ENCODE measurements at regions of chr9 and their contacts with region 1.

Region 1: DNA sequence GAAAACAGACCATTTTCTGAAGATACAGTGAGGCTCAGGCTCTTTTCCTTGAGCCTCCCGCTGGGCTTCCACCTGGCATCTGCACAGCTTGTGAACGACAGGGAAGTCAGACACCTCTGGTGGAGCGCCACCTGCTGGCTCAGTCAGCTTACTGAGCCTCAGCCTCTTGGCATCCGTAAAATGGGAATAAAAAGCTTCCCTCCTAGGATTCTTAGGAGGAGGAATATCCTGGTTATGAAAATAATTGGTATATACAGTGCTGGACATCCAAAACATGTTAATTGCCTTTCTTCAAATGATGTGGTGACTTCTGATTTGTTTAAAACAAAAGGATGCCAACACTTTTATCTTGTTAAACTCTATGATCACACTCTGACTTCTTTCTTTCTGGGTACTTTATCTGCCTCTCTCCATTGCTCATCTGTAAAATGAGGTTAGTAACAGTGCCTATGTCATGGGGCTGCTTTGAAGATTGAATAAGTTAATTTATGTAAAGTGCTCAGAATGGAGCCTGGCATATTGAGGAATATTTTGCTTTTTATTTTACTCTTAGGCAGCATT is 67.5 kb downstream of the MAMDC2 start:
- DNase-seq: peak in 4 of 5 donors; percentile 21 to 26 (median 24)
- H3K4me3 ChIP-seq: no peak overlapping the region
- H3K4me3 Mint-ChIP-seq: no peak overlapping the region
- H3K27ac ChIP-seq: no peak overlapping the region
- H3K27ac Mint-ChIP-seq: no peak overlapping the region
- H3K4me1 ChIP-seq: no peaks in the 10 kb centered on the region
- H3K4me1 Mint-ChIP-seq: peaks cover 6 to 11% (median 9%) of the 10 kb centered on the region in 4 donors
- H3K27me3 ChIP-seq: no peaks in the 10 kb centered on the region
- H3K27me3 Mint-ChIP-seq: peaks cover 10 to 17% of the 10 kb centered on the region in 2 donors

Region 2: GRCh38 chr9:69582544-69583297 is 528.4 kb before region 1 on chr9:
- CTCF ChIA-PET with region 1: no interaction called
- POLR2A ChIA-PET with region 1: no interaction called
- intact Hi-C with region 1: no loop called
- DNase-seq: no peak
- H3K4me3 ChIP-seq: no peak overlapping the region
- H3K4me3 Mint-ChIP-seq: no peak overlapping the region
- H3K27ac ChIP-seq: no peak overlapping the region
- H3K27ac Mint-ChIP-seq: no peak overlapping the region
- H3K4me1 ChIP-seq: no peaks in the 10 kb centered on the region
- H3K4me1 Mint-ChIP-seq: peaks cover 0 to 2% (median 0%) of the 10 kb centered on the region in 4 donors
- H3K27me3 ChIP-seq: no peaks in the 10 kb centered on the region
- H3K27me3 Mint-ChIP-seq: peaks cover 0 to 4% of the 10 kb centered on the region in 2 donors

Region 3: DNA sequence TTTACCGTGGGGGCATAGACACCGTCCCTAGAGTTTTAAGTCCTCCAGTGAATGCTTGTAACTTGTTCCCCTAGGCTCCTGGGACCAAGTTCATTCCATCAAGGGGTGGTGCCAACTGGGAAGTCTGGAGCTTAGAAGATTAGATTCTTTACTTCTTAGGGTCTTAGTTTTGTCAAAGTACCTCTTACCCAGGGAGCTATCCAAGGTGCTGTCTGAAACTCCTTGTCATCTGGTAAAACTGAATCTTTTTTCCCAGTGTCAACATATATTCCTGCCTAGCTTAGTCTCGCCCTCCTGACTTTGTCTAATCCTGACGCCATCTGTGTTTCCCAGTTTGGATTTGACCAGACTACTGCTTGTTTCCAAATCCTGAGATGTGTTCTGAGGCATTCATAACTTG is 25.9 kb before region 1 on chr9:
- CTCF ChIA-PET with region 1: interaction called, 12 read pairs
- POLR2A ChIA-PET with region 1: no interaction called
- intact Hi-C with region 1: no loop called
- DNase-seq: no peak
- H3K4me3 ChIP-seq: no peak overlapping the region
- H3K4me3 Mint-ChIP-seq: no peak overlapping the region
- H3K27ac ChIP-seq: no peak overlapping the region
- H3K27ac Mint-ChIP-seq: no peak overlapping the region
- H3K4me1 ChIP-seq: no peaks in the 10 kb centered on the region
- H3K4me1 Mint-ChIP-seq: peaks cover 0 to 5% (median 0%) of the 10 kb centered on the region in 4 donors
- H3K27me3 ChIP-seq: no peaks in the 10 kb centered on the region
- H3K27me3 Mint-ChIP-seq: peaks cover 5 to 13% of the 10 kb centered on the region in 2 donors

Region 4: GRCh38 chr9:70093944-70094343 is 17.2 kb before region 1 on chr9:
- CTCF ChIA-PET with region 1: interaction called, 12 read pairs
- POLR2A ChIA-PET with region 1: no interaction called
- intact Hi-C with region 1: no loop called
- DNase-seq: peak in 4 of 5 donors; percentile 3 to 41 (median 31)
- H3K4me3 ChIP-seq: no peak overlapping the region
- H3K4me3 Mint-ChIP-seq: no peak overlapping the region
- H3K27ac ChIP-seq: no peak overlapping the region
- H3K27ac Mint-ChIP-seq: peak overlapping the region in 3 of 7 donors; percentile 25 to 48 (median 48)
- H3K4me1 ChIP-seq: no peaks in the 10 kb centered on the region
- H3K4me1 Mint-ChIP-seq: peaks cover 6 to 15% (median 8%) of the 10 kb centered on the region in 4 donors
- H3K27me3 ChIP-seq: no peaks in the 10 kb centered on the region
- H3K27me3 Mint-ChIP-seq: peaks cover 3 to 10% of the 10 kb centered on the region in 2 donors

Region 5: DNA sequence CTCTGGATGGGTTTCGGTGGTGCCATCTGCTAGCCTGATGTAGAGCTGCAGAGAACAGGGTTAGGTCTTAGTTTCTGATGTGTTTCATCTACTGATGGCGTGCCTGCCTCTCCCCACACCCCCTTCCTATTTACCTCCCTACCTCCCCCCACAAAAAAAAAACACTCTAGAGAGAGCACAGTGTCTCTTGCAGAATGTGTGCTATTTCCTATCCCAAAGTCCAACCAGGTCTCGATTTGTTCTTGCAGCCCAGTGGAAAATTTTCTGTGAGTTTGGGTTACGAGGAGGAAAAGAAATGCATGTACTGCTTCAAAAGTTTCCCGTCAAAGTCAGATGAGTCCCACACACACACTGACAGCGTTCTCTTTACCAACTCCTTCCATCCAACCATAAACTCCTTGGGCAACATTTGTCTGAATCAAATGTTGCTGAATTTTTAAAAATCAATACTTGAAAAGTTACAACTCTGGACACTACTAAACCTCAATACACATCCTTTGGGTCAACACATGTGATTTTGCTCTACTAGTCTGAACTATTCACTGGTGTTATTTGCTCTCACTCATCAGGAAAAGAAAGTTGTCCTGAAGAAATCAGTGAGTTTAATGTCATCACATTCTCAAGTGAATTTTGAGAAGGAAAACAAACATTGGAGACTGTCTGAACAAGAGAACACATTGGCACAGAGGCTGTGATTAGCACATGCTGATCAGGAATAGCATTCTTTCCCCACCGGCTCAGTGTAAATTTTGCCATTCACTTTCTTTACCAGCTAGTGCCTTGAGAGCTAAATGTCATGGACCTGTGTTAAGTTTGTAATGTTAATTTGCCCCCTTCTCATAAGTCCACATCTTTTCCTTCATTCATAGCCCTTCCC is 16.7 kb after region 1 on chr9:
- CTCF ChIA-PET with region 1: interaction called, 34 read pairs
- POLR2A ChIA-PET with region 1: no interaction called
- intact Hi-C with region 1: no loop called
- DNase-seq: no peak
- H3K4me3 ChIP-seq: no peak overlapping the region
- H3K4me3 Mint-ChIP-seq: no peak overlapping the region
- H3K27ac ChIP-seq: no peak overlapping the region
- H3K27ac Mint-ChIP-seq: no peak overlapping the region
- H3K4me1 ChIP-seq: no peaks in the 10 kb centered on the region
- H3K4me1 Mint-ChIP-seq: no peaks in the 10 kb centered on the region
- H3K27me3 ChIP-seq: no peaks in the 10 kb centered on the region
- H3K27me3 Mint-ChIP-seq: peaks cover 2% of the 10 kb centered on the region in 2 donors